MCF 10A (cell line): ENCODE measurements at regions of chr7 and their contacts with region 1.

Region 1: GRCh38 chr7:1432411-1433082 is 26.7 kb downstream of the MICALL2 start:
- DNase-seq: peak; percentile 66
- H3K4me3 Mint-ChIP-seq: no peak overlapping the region
- H3K27ac Mint-ChIP-seq: peak overlapping the region; percentile 3
- H3K4me1 Mint-ChIP-seq: peaks cover 6% of the 10 kb centered on the region
- H3K27me3 Mint-ChIP-seq: no peaks in the 10 kb centered on the region
- CTCF ChIP-seq: peak; percentile 97

Region 2: DNA sequence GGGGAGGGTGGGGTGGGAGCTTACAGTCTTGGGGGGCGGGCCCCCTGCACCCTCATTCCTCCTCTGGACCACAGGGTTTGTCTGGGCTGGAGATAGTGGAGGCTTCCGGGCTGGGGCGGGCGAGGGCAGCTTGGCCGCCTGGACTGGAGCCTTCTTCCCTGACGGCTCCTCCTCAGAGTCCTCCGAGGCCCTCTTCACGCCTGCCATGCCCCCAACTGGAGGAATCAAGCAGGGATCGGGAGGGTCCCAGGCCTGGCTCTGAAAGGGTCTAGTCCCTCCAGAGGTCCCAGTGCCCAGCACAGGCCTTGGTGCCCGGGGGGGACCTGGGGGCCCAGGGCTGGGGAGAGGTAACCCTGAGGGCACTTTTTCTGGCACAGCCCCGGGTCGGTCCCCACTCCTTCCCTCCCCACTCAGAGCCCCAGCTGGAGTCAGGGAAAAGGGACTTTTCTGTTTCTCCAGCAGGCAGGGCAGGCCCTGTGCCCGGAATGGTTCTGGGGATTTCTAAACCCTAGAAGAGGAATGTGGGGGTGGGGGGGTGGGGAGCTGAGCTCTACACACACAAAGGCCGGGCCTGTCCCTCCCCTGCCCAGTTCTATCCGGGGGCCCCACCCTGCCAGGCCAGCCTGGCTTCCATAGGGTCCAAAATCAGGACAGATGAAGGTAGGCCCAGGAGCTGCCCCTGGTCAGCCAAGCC is 15.2 kb after region 1 on chr7:
- CTCF ChIA-PET with region 1: interaction called, 14 read pairs
- POLR2A ChIA-PET with region 1: no interaction called
- intact Hi-C with region 1: no loop called
- DNase-seq: no peak
- H3K4me3 Mint-ChIP-seq: no peak overlapping the region
- H3K27ac Mint-ChIP-seq: no peak overlapping the region
- H3K4me1 Mint-ChIP-seq: peaks cover 5% of the 10 kb centered on the region
- H3K27me3 Mint-ChIP-seq: no peaks in the 10 kb centered on the region
- CTCF ChIP-seq: no peak

Region 3: DNA sequence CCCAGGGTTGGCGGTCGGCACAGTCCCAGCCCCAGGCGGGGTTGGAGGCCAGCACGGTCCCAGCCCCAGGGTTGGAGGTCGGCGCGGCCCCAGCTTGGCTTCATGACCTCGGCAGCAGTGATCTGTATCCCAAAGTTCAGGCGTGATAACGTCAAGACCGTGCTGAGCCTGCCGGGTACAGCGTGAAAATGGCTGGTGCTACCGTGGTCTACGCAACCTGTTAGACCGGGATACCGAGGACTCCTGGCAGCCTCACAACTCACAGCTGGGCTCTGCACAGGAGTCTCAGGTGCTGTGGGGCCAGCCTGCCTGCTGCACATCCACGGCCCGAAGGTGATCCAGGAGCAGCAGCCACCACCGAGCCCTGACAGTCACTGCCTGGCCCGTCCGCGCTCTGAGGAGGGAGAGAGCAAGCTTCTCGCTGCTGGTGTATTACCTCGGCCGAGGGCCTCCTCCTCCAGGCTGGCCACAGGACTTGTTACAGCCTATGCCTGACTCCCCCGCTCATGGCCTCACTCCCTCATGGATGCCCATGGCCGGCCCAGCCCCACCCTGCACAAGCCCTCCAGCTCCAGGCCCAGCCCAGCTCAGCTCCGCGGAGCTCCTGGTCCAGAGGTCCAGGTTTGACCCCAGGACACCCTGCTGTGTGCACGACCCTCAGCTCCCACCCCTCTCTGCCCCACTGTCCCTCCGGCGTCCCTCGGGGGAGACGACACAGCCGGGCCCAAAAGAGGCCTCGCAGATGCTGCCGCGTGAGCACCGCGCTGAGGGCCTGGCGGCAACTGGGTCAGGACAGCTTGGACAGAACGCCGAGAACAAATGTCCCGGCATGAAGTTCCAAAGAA is 393.6 kb after region 1 on chr7:
- CTCF ChIA-PET with region 1: no interaction called
- POLR2A ChIA-PET with region 1: no interaction called
- intact Hi-C with region 1: no loop called
- DNase-seq: no peak
- H3K4me3 Mint-ChIP-seq: no peak overlapping the region
- H3K27ac Mint-ChIP-seq: no peak overlapping the region
- H3K4me1 Mint-ChIP-seq: no peaks in the 10 kb centered on the region
- H3K27me3 Mint-ChIP-seq: no peaks in the 10 kb centered on the region
- CTCF ChIP-seq: no peak